Panc1 (cell line): ENCODE measurements at regions of chr19 and their contacts with region 1.

Region 1: DNA sequence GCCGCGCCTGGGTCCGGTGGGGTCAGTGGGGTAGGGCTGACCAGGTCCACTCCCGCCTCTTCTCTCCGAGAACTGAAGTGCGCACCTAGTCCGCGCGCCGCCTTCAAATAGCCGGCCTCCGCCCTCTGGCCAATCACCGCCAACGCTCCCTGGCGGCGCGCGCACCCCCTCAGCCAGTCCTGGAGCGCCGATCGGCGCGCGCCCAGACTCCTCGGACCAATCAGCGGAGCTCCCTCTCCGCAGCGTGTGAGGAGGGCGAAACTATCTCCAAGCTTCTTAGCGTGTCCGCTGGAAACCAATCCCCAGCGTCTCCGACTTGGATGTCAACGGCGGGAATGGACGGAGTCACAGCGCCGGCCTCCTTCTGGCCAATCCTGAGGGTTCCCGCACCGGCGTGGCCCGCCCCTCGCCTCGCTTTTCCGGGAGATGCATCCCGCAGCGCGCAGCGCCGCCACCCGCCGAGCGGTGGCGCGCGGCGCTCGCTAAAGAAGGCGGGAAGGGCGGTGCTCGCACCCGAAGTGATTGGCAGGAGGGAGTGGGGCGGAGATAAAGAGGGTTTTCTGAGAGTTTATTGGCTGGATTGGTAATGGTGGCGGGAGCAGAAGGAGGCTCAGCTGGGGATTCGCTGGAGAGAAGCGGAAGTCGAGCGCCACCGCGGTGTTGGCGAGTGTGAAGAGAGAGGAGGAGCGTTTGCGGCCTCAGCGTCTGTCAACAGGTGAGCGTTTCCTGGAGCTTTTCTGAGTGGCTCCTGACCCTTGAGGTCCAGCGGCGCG is at the start of gene ASF1B:
- DNase-seq: peak; percentile 94
- ATAC-seq: peak; percentile 93
- H3K4me3 ChIP-seq: peak within 1 kb of the TSS; percentile 62 to 76
- H3K27ac ChIP-seq: peak within 1 kb of the TSS; percentile 81
- H3K4me1 ChIP-seq: peaks cover 8% of the 10 kb centered on the region; the same call in 1 of the 2 replicates
- H3K27me3 ChIP-seq: no peaks in the 10 kb centered on the region
- CTCF ChIP-seq: peak; percentile 93
- total RNA-seq, gene ASF1B: 35.4 TPM

Region 2: GRCh38 chr19:14347999-14348889 is 211.5 kb after region 1 on chr19:
- CTCF ChIA-PET with region 1: interaction called, 5 read pairs
- POLR2A ChIA-PET with region 1: interaction called, 12 read pairs
- in situ Hi-C with region 1: no loop called
- intact Hi-C with region 1: no loop called
- DNase-seq: no peak
- ATAC-seq: peak; percentile 86
- H3K4me3 ChIP-seq: peak overlapping the region; percentile 18 to 46
- H3K27ac ChIP-seq: no peak overlapping the region
- H3K4me1 ChIP-seq: no peaks in the 10 kb centered on the region; the same call in 1 of the 2 replicates
- H3K27me3 ChIP-seq: no peaks in the 10 kb centered on the region
- CTCF ChIP-seq: peak; percentile 97

Region 3: DNA sequence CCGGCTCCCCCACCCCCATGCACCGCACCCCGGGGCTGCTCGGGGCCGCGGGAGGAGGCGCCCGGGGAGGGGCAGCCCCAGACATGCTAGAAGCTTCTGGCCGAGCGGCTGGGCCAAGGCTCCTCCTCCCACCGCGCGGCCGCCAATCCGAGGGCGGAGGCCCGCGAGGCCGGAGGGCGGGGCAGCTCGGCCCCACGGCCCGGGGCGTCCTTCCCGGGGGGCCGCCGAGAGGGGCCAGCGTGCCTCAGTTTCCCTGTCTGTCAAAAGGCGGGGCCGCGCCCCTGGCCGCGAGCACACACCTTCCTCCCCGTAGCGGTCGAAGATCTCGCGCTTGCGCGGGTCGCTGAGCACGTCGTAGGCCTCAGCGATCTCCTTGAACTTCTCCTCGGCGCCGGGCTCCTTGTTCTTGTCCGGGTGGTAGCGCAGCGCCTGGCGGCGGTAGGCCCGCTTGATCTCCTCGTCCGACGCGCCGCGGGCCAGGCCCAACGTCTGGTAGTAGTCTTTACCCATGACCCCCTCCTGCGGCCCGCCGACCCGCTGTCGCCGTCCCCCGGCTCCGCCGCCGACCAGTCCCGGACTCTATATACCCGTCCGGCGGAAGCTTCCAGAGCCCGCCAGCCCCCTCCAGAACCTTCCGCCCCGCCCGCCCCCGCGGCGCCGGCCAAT is 381.3 kb after region 1 on chr19 and contains the start of gene DNAJB1:
- CTCF ChIA-PET with region 1: no interaction called
- POLR2A ChIA-PET with region 1: interaction called, 10 read pairs
- in situ Hi-C with region 1: no loop called
- intact Hi-C with region 1: no loop called
- DNase-seq: no peak
- ATAC-seq: peak; percentile 84
- H3K4me3 ChIP-seq: peak within 1 kb of the TSS; percentile 86 to 97
- H3K27ac ChIP-seq: peak within 1 kb of the TSS; percentile 93
- H3K4me1 ChIP-seq: peaks cover 46% of the 10 kb centered on the region
- H3K27me3 ChIP-seq: no peaks in the 10 kb centered on the region
- CTCF ChIP-seq: no peak
- total RNA-seq, gene DNAJB1: 149 TPM